Gastrocnemius medialis (tissue), 4 donors: ENCODE measurements at regions of chr9 and their contacts with region 1.

Region 1: GRCh38 chr9:126500684-126501382 is 112.9 kb upstream of the LMX1B start:
- DNase-seq: peak; percentile 38 to 47
- ATAC-seq: peak; percentile 58 to 69
- H3K4me3 ChIP-seq: no peak overlapping the region
- H3K27ac ChIP-seq: no peak overlapping the region
- H3K4me1 ChIP-seq: peaks cover 5 to 10% of the 10 kb centered on the region in 2 donors
- H3K27me3 ChIP-seq: no peaks in the 10 kb centered on the region
- CTCF ChIP-seq: peak; percentile 55 to 96 (median 92)
- POLR2A ChIP-seq: no peak

Region 2: DNA sequence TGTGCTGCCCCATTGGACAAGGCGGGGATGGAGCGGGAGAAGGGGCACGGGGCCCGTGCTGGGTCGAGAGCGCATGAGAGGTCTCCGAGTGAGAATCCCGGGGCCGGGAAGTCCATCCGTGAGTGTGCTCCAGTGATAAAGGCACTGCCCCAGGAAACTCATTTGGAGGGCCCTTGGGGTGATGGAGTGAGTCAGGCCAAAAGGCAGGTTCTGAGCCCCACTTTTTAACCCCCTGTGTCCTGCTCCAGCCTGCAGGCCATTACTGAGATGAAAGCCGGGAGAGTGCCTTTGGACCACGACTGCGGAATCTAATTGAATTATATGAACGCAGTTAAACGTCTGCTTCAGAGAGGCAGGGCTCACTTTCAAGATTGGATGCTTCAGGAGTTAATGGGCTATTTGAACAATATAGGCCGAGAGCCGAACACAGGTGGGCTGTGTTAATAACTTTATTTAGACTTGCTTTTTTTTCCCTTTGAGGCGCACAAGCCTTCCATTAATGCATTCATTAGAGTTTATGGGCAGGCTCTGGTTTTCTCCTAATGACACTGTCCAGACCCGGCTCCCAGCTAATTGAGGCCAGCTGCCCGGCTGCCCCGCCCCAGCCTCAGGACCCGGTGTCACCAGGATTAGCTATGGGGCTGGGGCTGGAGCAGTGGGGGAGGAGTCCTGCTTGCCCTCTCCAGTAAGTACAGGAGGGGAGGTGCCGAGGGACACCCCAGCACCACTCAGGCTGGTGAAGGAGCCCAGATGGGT is 33.8 kb after region 1 on chr9:
- in situ Hi-C with region 1: no loop called
- intact Hi-C with region 1: no loop called
- DNase-seq: no peak
- ATAC-seq: no peak
- H3K4me3 ChIP-seq: no peak overlapping the region
- H3K27ac ChIP-seq: no peak overlapping the region
- H3K4me1 ChIP-seq: no peaks in the 10 kb centered on the region
- H3K27me3 ChIP-seq: peaks cover 0 to 9% (median 0%) of the 10 kb centered on the region in 3 donors
- CTCF ChIP-seq: no peak
- POLR2A ChIP-seq: no peak

Region 3: GRCh38 chr9:126558051-126558665 is 57.3 kb after region 1 on chr9:
- in situ Hi-C with region 1: loop called in 2 of 4 experiments (anchors 5 kb)
- intact Hi-C with region 1: loop called (anchors 1 kb)
- DNase-seq: peak; percentile 21 to 50
- ATAC-seq: peak; percentile 58 to 79
- H3K4me3 ChIP-seq: no peak overlapping the region
- H3K27ac ChIP-seq: no peak overlapping the region
- H3K4me1 ChIP-seq: no peaks in the 10 kb centered on the region
- H3K27me3 ChIP-seq: peaks cover 0 to 13% (median 0%) of the 10 kb centered on the region in 3 donors
- CTCF ChIP-seq: peak; percentile 62 to 91 (median 87)
- POLR2A ChIP-seq: no peak